PC-3 (cell line): ENCODE measurements at regions of chrX and their contacts with region 1.

Region 1: DNA sequence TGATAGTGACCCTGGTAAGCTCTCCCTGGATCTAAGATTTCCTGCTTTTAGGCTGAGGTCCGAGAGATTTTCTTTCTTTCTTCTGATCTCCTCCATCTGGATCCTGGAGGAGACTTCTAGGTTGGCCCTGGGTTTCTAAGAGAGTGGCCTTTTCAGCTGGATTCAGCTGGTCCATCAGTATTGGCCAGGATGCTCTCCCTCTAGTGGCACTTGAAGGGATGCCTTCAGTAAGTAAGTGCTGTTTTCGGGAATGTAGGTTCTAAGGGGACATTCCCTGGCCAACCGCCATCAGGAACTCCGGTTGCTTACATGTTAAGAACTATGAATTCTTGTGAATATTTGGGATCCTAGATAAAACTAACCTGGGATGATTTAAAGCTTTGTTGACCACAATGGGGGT is 56.9 kb downstream of the SERTM2 start:
- DNase-seq: peak; percentile 2
- ATAC-seq: no peak
- H3K4me3 ChIP-seq: no peak overlapping the region
- H3K27ac ChIP-seq: no peak overlapping the region
- H3K4me1 ChIP-seq: no peaks in the 10 kb centered on the region
- H3K27me3 ChIP-seq: no peaks in the 10 kb centered on the region
- CTCF ChIP-seq: peak; percentile 51

Region 2: DNA sequence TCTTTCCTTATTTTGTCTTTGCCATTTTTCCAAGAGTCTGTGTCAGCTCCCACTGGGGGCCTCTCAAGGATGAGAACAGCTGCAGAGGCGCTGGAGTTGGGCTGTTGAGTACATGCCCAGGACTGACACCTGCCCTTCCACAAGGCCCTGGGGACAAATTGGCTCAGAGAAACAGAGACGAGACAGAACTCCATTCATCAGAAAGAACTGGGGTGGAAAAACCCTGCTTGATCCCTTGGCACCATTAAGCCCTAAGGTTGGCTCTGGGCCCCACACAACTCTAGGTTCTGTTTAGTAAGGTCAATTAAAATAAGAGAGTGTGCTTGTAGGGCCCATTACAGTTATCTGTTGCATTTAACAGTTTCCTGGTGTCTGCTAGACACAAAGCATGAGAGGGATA is 219.9 kb before region 1 on chrX:
- CTCF ChIA-PET with region 1: interaction called, 11 read pairs
- POLR2A ChIA-PET with region 1: no interaction called
- intact Hi-C with region 1: no loop called
- DNase-seq: no peak
- ATAC-seq: no peak
- H3K4me3 ChIP-seq: no peak overlapping the region
- H3K27ac ChIP-seq: no peak overlapping the region
- H3K4me1 ChIP-seq: no peaks in the 10 kb centered on the region
- H3K27me3 ChIP-seq: no peaks in the 10 kb centered on the region
- CTCF ChIP-seq: no peak

Region 3: DNA sequence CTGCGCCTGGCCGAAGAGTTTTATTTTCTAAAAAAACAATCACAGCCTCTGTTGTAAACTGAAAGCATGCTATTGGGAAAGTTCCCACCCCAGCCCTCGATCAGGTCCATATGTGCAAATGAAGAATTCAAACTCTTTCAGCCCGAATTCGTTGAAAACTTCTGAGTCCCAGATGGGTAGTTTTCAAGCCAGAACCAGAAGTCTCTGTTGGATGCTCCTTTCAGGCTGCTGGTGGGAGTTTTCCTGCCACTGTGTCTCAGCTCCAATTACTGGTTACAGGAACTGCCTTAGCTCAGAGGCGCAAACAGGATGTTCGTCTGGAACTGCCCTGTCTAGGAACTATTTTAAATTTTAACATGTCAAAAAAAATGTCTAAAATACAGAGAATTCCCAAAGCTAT is 103.3 kb after region 1 on chrX:
- CTCF ChIA-PET with region 1: no interaction called
- POLR2A ChIA-PET with region 1: no interaction called
- intact Hi-C with region 1: no loop called
- DNase-seq: no peak
- ATAC-seq: no peak
- H3K4me3 ChIP-seq: no peak overlapping the region
- H3K27ac ChIP-seq: no peak overlapping the region
- H3K4me1 ChIP-seq: no peaks in the 10 kb centered on the region
- H3K27me3 ChIP-seq: no peaks in the 10 kb centered on the region
- CTCF ChIP-seq: no peak

Region 4: DNA sequence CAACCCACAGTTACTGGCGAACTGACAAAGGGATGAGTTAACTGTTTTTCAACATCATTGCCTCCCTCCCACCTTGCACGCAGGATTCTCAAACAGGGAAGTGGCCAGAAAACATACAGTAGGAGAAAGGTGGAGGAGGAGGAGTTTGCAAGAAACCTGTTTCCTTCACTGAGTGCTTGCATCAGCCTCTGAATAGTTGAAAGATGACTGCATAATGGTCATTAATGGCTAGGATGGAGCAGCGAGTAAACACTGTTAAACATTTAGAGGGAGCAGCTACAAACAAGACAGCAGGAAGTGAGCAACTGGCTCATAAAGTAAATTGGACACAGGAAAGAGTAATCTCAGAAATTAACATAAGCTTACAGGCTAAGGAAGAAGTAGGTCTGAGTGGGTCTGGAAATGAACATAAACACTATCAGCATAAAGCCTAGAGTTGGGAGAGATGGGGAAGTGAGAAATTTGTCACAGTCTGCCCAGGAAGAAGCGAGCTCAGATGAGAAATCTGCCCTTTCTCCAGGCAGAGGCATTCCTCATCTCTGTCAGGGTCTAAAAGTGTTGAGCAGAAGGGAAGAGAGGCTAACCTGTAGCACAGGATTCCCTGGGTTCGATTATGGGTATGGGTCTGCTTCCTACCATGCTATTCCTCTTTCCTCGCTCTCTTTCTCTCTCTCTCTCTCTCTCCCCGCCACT is 346.2 kb after region 1 on chrX:
- CTCF ChIA-PET with region 1: no interaction called
- POLR2A ChIA-PET with region 1: no interaction called
- intact Hi-C with region 1: no loop called
- DNase-seq: peak; percentile 82
- ATAC-seq: peak; percentile 95
- H3K4me3 ChIP-seq: no peak overlapping the region
- H3K27ac ChIP-seq: peak overlapping the region; percentile 70
- H3K4me1 ChIP-seq: peaks cover 9% of the 10 kb centered on the region; the same call in 1 of the 2 replicates
- H3K27me3 ChIP-seq: no peaks in the 10 kb centered on the region
- CTCF ChIP-seq: no peak